GM12878 (cell line): ENCODE measurements at regions of chr4 and their contacts with region 1.

Region 1: DNA sequence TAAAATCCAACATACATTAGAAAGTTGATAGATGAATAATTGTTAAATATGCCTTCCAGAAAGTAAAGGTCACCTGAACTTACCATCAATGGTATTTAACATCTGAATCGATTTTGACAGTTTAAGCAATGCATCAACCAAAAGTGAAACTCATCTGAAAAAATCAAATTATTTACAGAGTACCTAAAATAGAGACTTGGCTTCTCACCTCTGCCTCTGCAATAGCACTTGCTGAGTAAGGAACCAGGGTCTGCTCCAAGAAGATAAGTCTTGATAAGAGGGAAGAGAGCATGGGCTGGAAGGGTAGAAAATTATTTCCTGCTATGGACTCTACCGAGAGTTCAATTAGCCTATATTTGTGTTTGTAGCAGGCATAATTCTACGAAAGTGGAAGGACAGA is 868.3 kb downstream of the STIM2 start:
- DNase-seq: no peak
- ATAC-seq: peak; percentile 53
- H3K4me3 ChIP-seq: no peak overlapping the region
- H3K27ac ChIP-seq: no peak overlapping the region
- H3K4me1 ChIP-seq: no peaks in the 10 kb centered on the region
- H3K27me3 ChIP-seq: no peaks in the 10 kb centered on the region
- CTCF ChIP-seq: no peak
- EP300 ChIP-seq: no peak
- POLR2A ChIP-seq: no peak
- RAD21 ChIP-seq: no peak

Region 2: DNA sequence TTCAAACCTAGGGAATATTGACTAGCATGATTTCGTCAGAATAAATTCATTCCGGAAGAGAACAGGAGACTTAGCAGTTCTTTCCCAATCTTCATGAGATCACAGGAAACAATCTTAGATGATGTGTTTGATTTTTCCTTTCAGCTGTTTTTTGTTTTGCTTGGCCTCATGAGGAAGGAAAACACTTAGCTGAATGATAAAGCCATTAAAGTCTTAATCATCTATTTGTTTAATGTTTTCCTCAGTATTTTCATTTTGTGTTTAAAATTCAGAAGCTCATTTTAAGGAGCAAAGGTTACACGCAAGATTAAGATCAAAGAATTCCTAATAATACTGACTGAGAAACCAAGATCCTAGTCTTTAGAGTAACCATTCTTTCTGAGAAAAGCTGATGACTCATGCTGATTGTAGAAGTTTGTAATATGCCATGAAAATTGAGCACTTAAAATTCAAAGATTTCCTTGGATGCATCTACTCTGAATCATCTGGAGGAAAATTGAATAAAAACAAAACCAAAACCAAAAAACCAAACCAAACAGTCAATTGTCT is 1160.4 kb before region 1 on chr4:
- CTCF ChIA-PET with region 1: no interaction called
- POLR2A ChIA-PET with region 1: no interaction called
- RAD21 ChIA-PET with region 1: no interaction called
- SMC1A ChIA-PET with region 1: no interaction called
- in situ Hi-C with region 1: no loop called
- intact Hi-C with region 1: no loop called
- DNase-seq: no peak
- ATAC-seq: no peak
- H3K4me3 ChIP-seq: no peak overlapping the region
- H3K27ac ChIP-seq: no peak overlapping the region
- H3K4me1 ChIP-seq: no peaks in the 10 kb centered on the region
- H3K27me3 ChIP-seq: no peaks in the 10 kb centered on the region
- CTCF ChIP-seq: no peak
- EP300 ChIP-seq: no peak
- POLR2A ChIP-seq: no peak
- RAD21 ChIP-seq: no peak

Region 3: GRCh38 chr4:27764526-27764837 is 35.6 kb after region 1 on chr4:
- CTCF ChIA-PET with region 1: no interaction called
- POLR2A ChIA-PET with region 1: interaction called, 5 read pairs
- RAD21 ChIA-PET with region 1: interaction called, 6 read pairs
- SMC1A ChIA-PET with region 1: interaction called, 11 read pairs
- in situ Hi-C with region 1: no loop called
- intact Hi-C with region 1: no loop called
- DNase-seq: peak; percentile 1
- ATAC-seq: peak; percentile 78
- H3K4me3 ChIP-seq: no peak overlapping the region
- H3K27ac ChIP-seq: no peak overlapping the region
- H3K4me1 ChIP-seq: no peaks in the 10 kb centered on the region
- H3K27me3 ChIP-seq: no peaks in the 10 kb centered on the region
- CTCF ChIP-seq: no peak
- EP300 ChIP-seq: no peak
- POLR2A ChIP-seq: no peak
- RAD21 ChIP-seq: no peak

Region 4: GRCh38 chr4:27779827-27780226 is 50.9 kb after region 1 on chr4:
- CTCF ChIA-PET with region 1: no interaction called
- POLR2A ChIA-PET with region 1: no interaction called
- RAD21 ChIA-PET with region 1: no interaction called
- SMC1A ChIA-PET with region 1: no interaction called
- in situ Hi-C with region 1: no loop called
- intact Hi-C with region 1: no loop called
- DNase-seq: no peak
- ATAC-seq: no peak
- H3K4me3 ChIP-seq: no peak overlapping the region
- H3K27ac ChIP-seq: no peak overlapping the region
- H3K4me1 ChIP-seq: no peaks in the 10 kb centered on the region
- H3K27me3 ChIP-seq: no peaks in the 10 kb centered on the region
- CTCF ChIP-seq: no peak
- EP300 ChIP-seq: no peak
- POLR2A ChIP-seq: no peak
- RAD21 ChIP-seq: no peak